ENCODE measurements at regions of chr19 and their contacts with region 1.

Region 1: GRCh38 chr19:5719961-5720790 is at the starts of genes CATSPERD and LONP1:
- DNase-seq: peak; percentile 99
- H3K4me3 Mint-ChIP-seq: peak within 1 kb of the TSS; percentile 86
- H3K27ac Mint-ChIP-seq: peak within 1 kb of the TSS; percentile 89
- H3K4me1 Mint-ChIP-seq: peaks cover 3% of the 10 kb centered on the region
- H3K27me3 Mint-ChIP-seq: no peaks in the 10 kb centered on the region
- CTCF ChIP-seq: peak; percentile 84
- total RNA-seq, gene CATSPERD: not detected in 2 replicates
- total RNA-seq, gene LONP1: 219 and 254 TPM in 2 replicates

Region 2: DNA sequence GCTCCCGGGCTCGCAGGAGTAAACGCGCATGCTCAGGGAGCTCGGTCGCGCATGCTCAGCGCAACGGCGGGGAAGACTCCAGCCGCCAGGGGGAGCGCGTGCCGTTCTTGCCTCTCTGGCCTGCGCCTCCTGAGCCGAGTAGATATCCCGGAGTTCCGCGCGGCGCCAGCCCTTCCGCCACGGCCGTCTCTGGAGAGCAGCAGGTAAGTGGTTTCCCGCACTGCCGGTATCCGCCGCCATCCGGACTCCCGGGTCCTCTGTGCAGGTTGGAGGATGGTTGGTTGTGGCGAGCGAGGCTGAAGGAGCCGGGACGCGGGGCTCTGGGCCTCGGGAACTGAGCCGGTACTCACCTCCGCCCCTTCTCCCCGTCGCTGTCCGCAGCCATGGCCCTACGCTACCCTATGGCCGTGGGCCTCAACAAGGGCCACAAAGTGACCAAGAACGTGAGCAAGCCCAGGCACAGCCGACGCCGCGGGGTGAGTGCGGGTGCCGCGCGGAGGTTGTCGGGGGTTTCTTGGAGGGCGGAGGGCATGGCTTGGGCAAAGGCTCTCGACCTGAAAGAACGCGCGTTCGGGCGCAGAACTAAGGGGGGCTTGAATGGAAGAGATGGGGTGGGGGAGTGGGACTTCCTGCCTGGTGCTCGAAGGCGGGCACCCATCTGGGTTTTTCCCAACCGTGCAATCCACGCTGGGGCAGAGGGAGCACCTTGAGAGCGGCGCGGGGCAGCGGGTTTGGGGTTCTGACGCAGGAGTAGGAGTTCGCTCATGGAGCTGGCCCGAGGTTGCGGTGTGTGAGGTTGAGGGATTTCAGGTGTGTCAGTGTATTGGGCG is 29.8 kb before region 1 on chr19 and contains the start of gene RPL36:
- CTCF ChIA-PET with region 1: interaction called, 43 read pairs
- POLR2A ChIA-PET with region 1: interaction called, 119 read pairs
- intact Hi-C with region 1: loop called (anchors 1 kb)
- DNase-seq: peak; percentile 97
- H3K4me3 Mint-ChIP-seq: peak within 1 kb of the TSS; percentile 92
- H3K27ac Mint-ChIP-seq: peak within 1 kb of the TSS; percentile 97
- H3K4me1 Mint-ChIP-seq: no peaks in the 10 kb centered on the region
- H3K27me3 Mint-ChIP-seq: no peaks in the 10 kb centered on the region
- CTCF ChIP-seq: peak; percentile 90
- total RNA-seq, gene RPL36: 1,569 and 1,807 TPM in 2 replicates

Region 3: DNA sequence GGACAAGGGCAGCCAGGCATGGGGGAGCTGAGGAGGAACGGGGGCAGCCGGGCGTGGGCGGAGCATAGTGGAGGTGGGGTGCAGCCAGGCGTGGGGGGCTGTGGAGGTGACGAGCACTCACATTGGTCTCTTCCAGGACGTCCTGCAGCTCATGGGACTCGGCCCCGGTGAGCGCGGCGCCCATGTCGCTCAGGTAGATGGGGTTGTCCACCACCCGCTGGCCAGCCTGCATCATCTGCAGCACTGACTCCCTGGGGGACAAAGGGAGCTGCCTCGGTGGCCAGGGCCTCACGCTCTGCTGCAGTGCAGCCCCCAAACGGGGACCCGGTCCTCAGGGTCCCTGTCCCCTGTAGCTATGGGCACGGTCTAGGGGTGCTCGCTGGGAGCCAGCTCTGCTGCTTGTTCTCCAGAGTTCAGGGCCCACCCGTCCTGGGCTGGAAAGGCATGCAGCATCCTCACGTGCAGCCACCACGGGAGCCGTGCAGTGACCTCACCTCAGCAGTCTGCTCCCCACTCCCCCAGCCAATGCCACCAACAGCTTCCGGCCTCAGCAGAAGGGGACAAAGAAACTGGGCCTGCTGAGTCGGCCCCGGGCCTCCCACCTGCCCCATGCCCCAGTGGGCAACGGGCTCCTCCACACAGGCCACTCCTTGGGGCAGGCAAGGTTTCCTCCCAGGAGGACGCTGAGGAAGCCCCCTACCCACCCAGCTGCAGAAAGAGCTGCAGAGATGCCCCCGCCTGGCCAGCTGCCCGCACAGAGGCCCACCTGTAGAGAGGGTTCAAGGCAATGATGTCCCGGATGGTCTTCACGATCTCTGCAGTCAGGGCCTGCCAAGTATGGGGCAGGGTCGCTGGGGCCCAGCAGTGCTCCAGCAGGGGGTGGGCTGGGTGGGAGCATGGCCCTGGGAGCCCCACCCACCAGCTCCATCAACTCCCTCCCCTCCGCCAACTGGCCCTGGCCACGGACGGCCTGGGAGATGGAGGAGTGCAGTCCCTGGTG is 12.3 kb before region 1 on chr19:
- CTCF ChIA-PET with region 1: interaction called, 4 read pairs
- POLR2A ChIA-PET with region 1: interaction called, 13 read pairs
- intact Hi-C with region 1: no loop called
- DNase-seq: no peak
- H3K4me3 Mint-ChIP-seq: no peak overlapping the region
- H3K27ac Mint-ChIP-seq: no peak overlapping the region
- H3K4me1 Mint-ChIP-seq: peaks cover 6% of the 10 kb centered on the region
- H3K27me3 Mint-ChIP-seq: no peaks in the 10 kb centered on the region
- CTCF ChIP-seq: no peak

Region 4: GRCh38 chr19:5790573-5791520 is 70.7 kb after region 1 on chr19 and contains the start of gene DUS3L:
- CTCF ChIA-PET with region 1: interaction called, 7 read pairs
- POLR2A ChIA-PET with region 1: interaction called, 24 read pairs
- intact Hi-C with region 1: no loop called
- DNase-seq: peak; percentile 98
- H3K4me3 Mint-ChIP-seq: peak within 1 kb of the TSS; percentile 98
- H3K27ac Mint-ChIP-seq: peak within 1 kb of the TSS; percentile 100
- H3K4me1 Mint-ChIP-seq: peaks cover 14% of the 10 kb centered on the region
- H3K27me3 Mint-ChIP-seq: no peaks in the 10 kb centered on the region
- CTCF ChIP-seq: no peak
- total RNA-seq, gene DUS3L: 53.5 and 77.6 TPM in 2 replicates

Measured in MCF 10A (cell line).